Head of caudate nucleus (tissue), 42 donors: ENCODE measurements at regions of chr10 and their contacts with region 1.

Region 1: DNA sequence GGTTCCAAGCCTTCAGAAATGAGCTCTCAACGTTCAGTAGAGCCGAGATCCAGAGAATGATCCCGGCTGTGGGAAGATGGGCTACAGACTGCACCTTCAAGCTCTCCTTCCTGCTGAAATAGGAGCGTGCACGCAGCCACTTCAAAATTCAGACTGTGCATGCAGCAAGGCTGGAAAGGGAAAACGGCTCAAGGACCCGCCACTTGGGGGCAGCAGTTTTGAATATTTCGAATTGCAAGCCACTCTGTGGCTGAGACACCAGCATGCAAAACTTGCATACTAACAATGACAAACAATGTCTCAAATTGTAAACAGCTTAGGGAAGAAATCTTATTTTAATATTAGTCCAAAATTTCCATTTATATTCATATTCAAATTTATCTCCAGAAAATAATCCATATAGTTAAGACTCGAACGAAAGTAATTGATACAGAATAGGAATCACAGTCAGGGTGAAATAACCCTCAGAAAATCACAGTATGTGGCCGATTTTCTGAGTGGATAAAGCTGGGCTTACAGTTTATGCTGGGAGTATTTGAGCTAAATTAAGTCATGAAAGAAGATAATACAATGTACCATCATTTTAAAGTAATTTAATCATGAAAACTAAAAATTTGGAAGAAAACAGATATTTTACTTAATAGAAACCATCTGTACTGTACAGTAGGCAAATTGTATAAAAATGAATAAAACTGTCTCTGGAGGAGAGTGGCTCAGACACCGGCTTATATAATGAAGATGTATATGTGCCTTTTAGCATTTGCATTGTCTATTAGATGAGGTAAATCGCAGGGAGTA is 137.9 kb upstream of the MKI67 start:
- DNase-seq: peak; percentile 65 to 90 (median 82)

Region 2: DNA sequence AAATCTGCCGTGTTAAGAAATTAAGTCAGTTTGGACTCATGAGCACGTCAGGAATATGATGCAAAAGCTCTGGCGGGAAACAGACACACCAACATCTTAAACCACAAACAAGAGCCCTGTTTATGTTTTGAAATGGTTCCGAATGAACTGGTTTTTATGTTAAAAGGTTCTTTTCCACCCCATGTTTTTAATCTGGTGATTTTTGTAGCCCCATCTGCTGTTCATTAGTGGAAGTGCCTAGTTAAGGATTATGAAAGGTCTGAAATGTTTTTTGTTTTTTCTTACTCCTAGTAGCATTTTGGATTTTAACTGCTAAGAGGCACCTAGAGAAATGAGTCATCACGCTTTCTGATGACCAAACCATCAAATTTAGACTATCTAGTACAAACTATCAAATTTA is 266.2 kb after region 1 on chr10:
- intact Hi-C with region 1: loop called (anchors 10 kb)
- DNase-seq: peak in 1 of 42 donors; percentile 40